Mammary epithelial cell (primary cell): ENCODE measurements at regions of chr20 and their contacts with region 1.

Region 1: GRCh38 chr20:48188657-48189551 is 403.6 kb upstream of the SULF2 start:
- DNase-seq: peak; percentile 83
- H3K4me3 ChIP-seq: no peak overlapping the region
- H3K27ac ChIP-seq: no peak overlapping the region
- H3K4me1 ChIP-seq: peaks cover 31% of the 10 kb centered on the region
- H3K27me3 ChIP-seq: no peaks in the 10 kb centered on the region
- CTCF ChIP-seq: peak; percentile 57 to 81

Region 2: GRCh38 chr20:47677635-47678453 is 511.1 kb before region 1 on chr20:
- CTCF ChIA-PET with region 1: no interaction called
- dilution Hi-C with region 1: no loop called
- in situ Hi-C with region 1: no loop called
- intact Hi-C with region 1: loop called (anchors 5 kb)
- DNase-seq: peak; percentile 55
- H3K4me3 ChIP-seq: no peak overlapping the region
- H3K27ac ChIP-seq: no peak overlapping the region
- H3K4me1 ChIP-seq: no peaks in the 10 kb centered on the region
- H3K27me3 ChIP-seq: no peaks in the 10 kb centered on the region
- CTCF ChIP-seq: peak; percentile 68 to 79

Region 3: GRCh38 chr20:47792021-47792618 is 396.8 kb before region 1 on chr20:
- CTCF ChIA-PET with region 1: no interaction called
- dilution Hi-C with region 1: no loop called
- in situ Hi-C with region 1: loop called in 1 of 2 experiments (anchors 10 kb)
- intact Hi-C with region 1: loop called (anchors 1 kb)
- DNase-seq: peak; percentile 97
- H3K4me3 ChIP-seq: no peak overlapping the region
- H3K27ac ChIP-seq: peak overlapping the region; percentile 83
- H3K4me1 ChIP-seq: peaks cover 58% of the 10 kb centered on the region
- H3K27me3 ChIP-seq: no peaks in the 10 kb centered on the region
- CTCF ChIP-seq: no peak

Region 4: DNA sequence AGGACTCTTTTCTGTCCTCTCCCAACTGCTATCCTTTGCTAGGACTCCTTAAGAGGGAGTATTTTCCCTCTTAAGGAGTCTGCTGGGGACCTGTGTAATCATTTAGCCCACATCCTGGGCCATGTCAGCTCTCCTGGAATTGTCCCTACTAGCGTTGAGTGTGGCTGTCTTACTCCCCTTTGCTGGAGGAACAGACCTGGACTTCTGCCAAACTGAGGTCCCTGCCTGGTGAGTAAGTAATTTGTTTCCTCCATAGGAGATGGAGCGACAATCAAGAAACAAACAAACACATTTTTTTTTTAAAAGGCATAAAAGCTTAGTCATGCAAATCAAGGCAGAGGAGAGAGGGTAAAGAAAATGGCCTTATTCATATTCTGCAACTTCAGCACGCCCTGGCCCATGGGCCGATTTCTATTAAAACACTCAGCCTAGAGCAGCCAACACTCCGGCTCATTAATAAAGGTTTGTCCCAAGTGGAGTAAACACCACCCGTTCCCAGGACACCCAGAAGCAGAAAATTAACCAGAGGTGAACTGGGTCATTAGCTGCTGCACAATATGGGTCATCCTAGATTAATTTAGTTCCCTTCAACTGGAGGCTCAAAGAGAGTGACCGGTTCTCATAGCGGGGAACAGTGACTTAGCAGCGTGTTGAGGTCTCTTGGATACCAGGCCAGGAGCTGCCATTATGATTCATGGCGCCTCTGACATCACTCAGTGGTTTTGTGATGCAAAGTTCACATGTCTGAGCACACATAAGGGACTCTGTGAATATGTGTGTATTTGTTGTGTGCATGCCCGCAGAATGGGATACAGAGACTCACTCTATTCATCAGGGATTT is 238.6 kb before region 1 on chr20:
- CTCF ChIA-PET with region 1: no interaction called
- dilution Hi-C with region 1: no loop called
- in situ Hi-C with region 1: no loop called
- intact Hi-C with region 1: loop called (anchors 10 kb)
- DNase-seq: peak; percentile 20
- H3K4me3 ChIP-seq: no peak overlapping the region
- H3K27ac ChIP-seq: no peak overlapping the region
- H3K4me1 ChIP-seq: no peaks in the 10 kb centered on the region
- H3K27me3 ChIP-seq: no peaks in the 10 kb centered on the region
- CTCF ChIP-seq: no peak

Region 5: GRCh38 chr20:48224520-48224919 is 35.6 kb after region 1 on chr20:
- CTCF ChIA-PET with region 1: no interaction called
- dilution Hi-C with region 1: loop called (anchors 5 kb)
- in situ Hi-C with region 1: no loop called
- intact Hi-C with region 1: no loop called
- DNase-seq: no peak
- H3K4me3 ChIP-seq: no peak overlapping the region
- H3K27ac ChIP-seq: no peak overlapping the region
- H3K4me1 ChIP-seq: no peaks in the 10 kb centered on the region
- H3K27me3 ChIP-seq: no peaks in the 10 kb centered on the region
- CTCF ChIP-seq: no peak